WTC11 (cell line): ENCODE measurements at regions of chrX and their contacts with region 1.

Region 1: DNA sequence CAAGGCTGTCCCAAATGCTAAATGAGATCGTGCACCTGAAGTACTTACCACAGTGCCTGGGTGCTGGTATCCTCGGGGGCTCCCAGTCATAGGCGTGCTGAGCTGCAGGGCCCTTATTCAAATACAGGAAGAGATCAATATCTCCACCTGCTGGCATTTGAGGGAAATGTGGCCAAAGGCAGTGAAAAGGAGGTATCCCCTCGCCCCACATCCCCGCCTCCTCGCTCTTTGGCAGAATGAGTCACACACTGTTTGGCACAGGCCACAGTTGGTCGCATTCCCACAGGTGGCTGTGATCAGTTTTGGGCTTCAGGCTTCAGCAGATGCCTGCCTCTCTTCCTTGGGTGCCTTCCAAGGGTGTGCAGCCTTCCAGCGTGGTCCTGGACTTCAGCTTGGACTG is 28.4 kb downstream of the ZNF185 start:
- DNase-seq: peak; percentile 57
- ATAC-seq: peak; percentile 88
- H3K4me3 Mint-ChIP-seq: no peak overlapping the region
- H3K27ac Mint-ChIP-seq: no peak overlapping the region
- H3K4me1 Mint-ChIP-seq: peaks cover 6% of the 10 kb centered on the region
- H3K27me3 Mint-ChIP-seq: no peaks in the 10 kb centered on the region
- CTCF ChIP-seq: no peak

Region 2: GRCh38 chrX:152904151-152905080 is 21.9 kb before region 1 on chrX:
- CTCF ChIA-PET with region 1: interaction called, 15 read pairs
- POLR2A ChIA-PET with region 1: no interaction called
- DNase-seq: peak; percentile 75
- ATAC-seq: peak; percentile 60
- H3K4me3 Mint-ChIP-seq: peak overlapping the region; percentile 43
- H3K27ac Mint-ChIP-seq: no peak overlapping the region
- H3K4me1 Mint-ChIP-seq: peaks cover 32% of the 10 kb centered on the region
- H3K27me3 Mint-ChIP-seq: peaks cover 3% of the 10 kb centered on the region; the same call in 1 of the 2 replicates
- CTCF ChIP-seq: peak; percentile 58